Activated CD4-positive, alpha-beta T cell treated with anti-CD3 and anti-CD28 coated beads for 36 hours (primary cell): ENCODE measurements at regions of chr19 and their contacts with region 1.

Region 1: GRCh38 chr19:43950834-43951645 is at the start of gene ZNF221:
- DNase-seq: peak; percentile 84
- ATAC-seq: peak; percentile 95
- H3K4me3 Mint-ChIP-seq: peak within 1 kb of the TSS; percentile 83
- H3K27ac Mint-ChIP-seq: peak within 1 kb of the TSS; percentile 85
- H3K4me1 Mint-ChIP-seq: peaks cover 6% of the 10 kb centered on the region
- H3K27me3 Mint-ChIP-seq: peaks cover 17% of the 10 kb centered on the region
- total RNA-seq, gene ZNF221: 1.8 to 1.9 TPM

Region 2: DNA sequence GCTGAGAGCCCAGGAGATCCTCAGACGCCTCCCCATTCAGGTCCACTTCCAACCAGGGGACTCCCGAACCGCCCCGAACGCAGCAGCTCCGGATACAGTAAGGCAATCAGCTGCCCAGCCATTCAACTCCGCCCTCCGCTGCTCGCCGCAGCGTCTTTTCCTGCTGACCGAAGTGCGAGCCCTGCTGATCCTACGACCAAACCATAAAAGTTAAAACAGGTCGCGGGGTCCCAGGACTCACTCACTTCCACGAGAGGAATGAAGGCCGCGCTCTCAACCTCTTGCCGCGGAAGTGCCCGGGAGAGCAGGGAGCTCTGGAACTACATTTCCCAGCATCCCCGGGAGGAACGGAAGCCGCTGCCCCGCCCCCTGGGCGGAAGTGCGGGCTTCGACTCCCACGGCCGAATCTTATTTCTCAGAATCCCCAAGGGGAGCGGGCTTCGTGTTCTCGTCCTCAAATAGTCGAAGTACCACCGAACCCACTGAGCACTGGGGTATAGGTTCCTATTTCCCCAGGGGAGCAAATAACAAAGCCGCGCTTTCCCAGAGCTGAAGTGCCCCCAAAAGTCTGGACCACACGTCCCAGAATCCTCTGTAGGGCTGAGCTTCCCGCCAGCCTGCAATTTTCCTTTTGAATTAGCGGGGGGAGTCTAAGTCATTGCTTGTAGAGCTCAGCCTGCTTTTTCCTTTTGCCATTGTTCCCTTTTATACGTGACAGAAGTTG is 15.9 kb before region 1 on chr19 and contains the start of gene ZNF45:
- CTCF ChIA-PET with region 1: interaction called, 7 read pairs
- POLR2A ChIA-PET with region 1: interaction called, 5 read pairs
- intact Hi-C with region 1: loop called in 1 of 2 experiments (anchors 1 kb)
- DNase-seq: peak; percentile 92
- ATAC-seq: peak; percentile 95
- H3K4me3 Mint-ChIP-seq: peak within 1 kb of the TSS; percentile 93
- H3K27ac Mint-ChIP-seq: peak within 1 kb of the TSS; percentile 91
- H3K4me1 Mint-ChIP-seq: peaks cover 22% of the 10 kb centered on the region
- H3K27me3 Mint-ChIP-seq: no peaks in the 10 kb centered on the region
- total RNA-seq, gene ZNF45: 9.6 to 12.1 TPM

Region 3: GRCh38 chr19:44071824-44072542 is 120.9 kb after region 1 on chr19 and contains the start of gene ZNF284:
- CTCF ChIA-PET with region 1: no interaction called
- POLR2A ChIA-PET with region 1: no interaction called
- intact Hi-C with region 1: loop called in 1 of 2 experiments (anchors 1 kb)
- DNase-seq: peak; percentile 88
- ATAC-seq: peak; percentile 99
- H3K4me3 Mint-ChIP-seq: peak within 1 kb of the TSS; percentile 83
- H3K27ac Mint-ChIP-seq: peak within 1 kb of the TSS; percentile 78
- H3K4me1 Mint-ChIP-seq: peaks cover 23% of the 10 kb centered on the region
- H3K27me3 Mint-ChIP-seq: peaks cover 2% of the 10 kb centered on the region
- total RNA-seq, gene ZNF284: 2.1 TPM

Region 4: DNA sequence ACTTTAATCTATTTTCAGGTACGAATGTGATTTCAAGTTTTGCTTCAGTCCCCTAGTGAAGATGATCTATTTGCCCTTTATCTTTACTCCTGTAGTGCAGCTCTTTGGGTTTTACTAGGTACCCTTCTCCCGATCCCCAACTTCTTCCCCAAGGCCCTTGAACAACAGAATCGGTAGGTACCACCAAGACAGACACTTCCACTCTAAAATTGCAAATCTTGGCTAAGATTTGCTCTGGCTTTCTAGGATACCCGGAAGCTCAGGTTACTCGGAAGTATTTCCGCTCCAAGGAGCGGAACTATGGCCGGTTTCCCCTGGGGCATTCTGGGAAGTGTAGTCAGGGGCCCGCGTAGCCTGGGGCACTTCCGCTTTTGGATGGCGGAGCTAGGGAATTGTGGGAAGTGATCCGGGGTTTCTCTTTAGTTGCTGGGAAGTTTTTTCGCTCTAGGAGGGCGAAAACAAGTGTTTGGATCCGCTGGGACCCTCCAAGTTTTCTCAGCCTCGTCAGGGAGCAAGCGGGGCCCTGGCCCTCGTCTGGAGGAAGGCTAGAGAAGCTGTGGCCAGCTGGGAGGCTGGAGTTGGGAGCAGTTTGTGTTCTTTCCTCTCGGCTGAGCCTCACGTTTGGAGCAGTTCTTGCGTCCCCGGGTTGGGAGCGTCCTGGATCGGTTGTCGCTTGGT is 256.2 kb after region 1 on chr19:
- CTCF ChIA-PET with region 1: no interaction called
- POLR2A ChIA-PET with region 1: no interaction called
- intact Hi-C with region 1: loop called in 1 of 2 experiments (anchors 1 kb)
- DNase-seq: peak; percentile 84
- ATAC-seq: peak; percentile 93
- H3K4me3 Mint-ChIP-seq: peak overlapping the region; percentile 80
- H3K27ac Mint-ChIP-seq: peak overlapping the region; percentile 73
- H3K4me1 Mint-ChIP-seq: peaks cover 4% of the 10 kb centered on the region
- H3K27me3 Mint-ChIP-seq: peaks cover 2% of the 10 kb centered on the region

Region 5: DNA sequence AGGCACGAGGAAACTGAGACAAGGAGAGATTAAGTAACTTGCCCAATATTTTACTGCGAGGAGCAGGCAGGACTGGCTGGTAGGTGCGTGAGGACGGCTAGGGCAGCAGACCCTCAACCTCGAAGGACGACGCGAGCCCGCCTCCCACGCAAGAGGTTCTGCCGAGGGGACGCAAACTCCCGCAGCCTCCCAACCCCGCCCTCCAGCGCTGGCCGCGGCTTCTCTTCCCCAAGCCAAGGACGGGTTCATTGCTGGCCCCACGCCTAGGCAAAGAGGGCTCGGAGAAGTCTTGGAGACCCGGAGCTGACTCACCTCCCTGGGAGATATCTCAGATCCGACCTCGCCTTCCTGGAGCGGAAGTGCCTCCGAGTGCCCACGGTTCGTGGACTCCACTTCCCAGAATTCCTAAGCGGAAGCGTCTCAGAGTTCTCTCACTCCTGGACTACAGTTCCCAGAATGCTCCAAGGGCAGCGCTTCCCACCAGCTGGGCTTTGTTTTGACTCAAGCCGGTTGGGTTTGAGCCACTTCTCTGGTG is 353.7 kb after region 1 on chr19 and contains the start of gene ZNF235:
- CTCF ChIA-PET with region 1: no interaction called
- POLR2A ChIA-PET with region 1: no interaction called
- intact Hi-C with region 1: loop called in 1 of 2 experiments (anchors 1 kb)
- DNase-seq: peak; percentile 87
- ATAC-seq: peak; percentile 97
- H3K4me3 Mint-ChIP-seq: peak within 1 kb of the TSS; percentile 83
- H3K27ac Mint-ChIP-seq: peak within 1 kb of the TSS; percentile 64
- H3K4me1 Mint-ChIP-seq: peaks cover 12% of the 10 kb centered on the region
- H3K27me3 Mint-ChIP-seq: no peaks in the 10 kb centered on the region
- total RNA-seq, gene ZNF235: 2.1 to 2.7 TPM